Activated T-helper 1 cell treated with anti-CD3 and anti-CD28 coated beads, Interleukin-12 subunit alpha, Interleukin-12 subunit beta, Interleukin-2, Interleukin-4 antibody, amounts not matched to agents 30 ng/mL and 10 ng/mL and 1 ng/mL, durations not matched to agents 14 hours and 24 hours and 36 hours (primary cell): ENCODE measurements at regions of chr19 and their contacts with region 1.

Region 1: DNA sequence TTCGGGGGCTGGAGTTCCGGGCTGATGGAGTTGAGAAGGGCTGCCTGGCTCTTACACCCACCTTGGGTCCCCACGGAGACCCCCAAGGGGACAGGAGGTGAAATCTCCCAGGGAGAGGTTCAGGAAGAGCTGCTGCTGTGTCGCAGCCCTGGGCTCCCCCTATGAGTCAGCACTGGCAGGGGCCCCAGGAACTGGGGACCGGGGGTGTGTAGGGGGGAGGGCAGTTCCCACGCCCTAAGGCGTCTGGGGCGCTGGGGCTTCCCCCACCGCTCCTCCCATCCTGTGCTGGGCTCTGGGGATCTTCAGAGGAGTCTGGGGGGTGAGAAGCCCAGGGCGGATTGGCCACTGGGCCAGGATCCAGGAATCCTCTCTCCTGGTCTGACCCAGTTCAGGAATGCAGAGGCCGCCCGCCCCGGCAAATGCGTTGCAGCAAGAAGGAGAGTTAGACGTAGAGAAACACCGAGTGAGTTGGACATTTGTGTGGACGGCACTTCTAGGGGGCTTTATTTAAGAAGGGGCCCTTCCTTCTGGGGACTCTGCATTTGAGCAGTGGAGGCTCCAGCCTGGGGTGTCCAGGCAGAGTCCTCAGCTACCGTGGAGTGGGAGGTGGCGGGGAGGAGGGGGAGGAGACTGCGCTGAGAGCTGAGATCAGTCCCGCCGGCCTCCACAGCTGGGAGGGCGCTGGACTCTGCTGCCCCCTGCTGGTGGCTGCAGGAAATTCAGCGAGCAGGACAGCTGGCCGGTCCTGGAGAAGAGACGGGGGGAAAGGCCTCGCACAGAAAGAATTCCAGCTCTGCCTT is 15.0 kb upstream of the NANOS3 start:
- DNase-seq: peak; percentile 82
- H3K4me3 Mint-ChIP-seq: peak overlapping the region; percentile 96
- H3K27ac Mint-ChIP-seq: peak overlapping the region; percentile 98
- H3K4me1 Mint-ChIP-seq: peaks cover 49% of the 10 kb centered on the region
- H3K27me3 Mint-ChIP-seq: peaks cover 22% of the 10 kb centered on the region

Region 2: GRCh38 chr19:13277104-13277809 is 584.7 kb before region 1 on chr19:
- intact Hi-C with region 1: loop called (anchors 5 kb)
- DNase-seq: peak; percentile 72
- H3K4me3 Mint-ChIP-seq: no peak overlapping the region
- H3K27ac Mint-ChIP-seq: peak overlapping the region; percentile 71
- H3K4me1 Mint-ChIP-seq: peaks cover 16% of the 10 kb centered on the region
- H3K27me3 Mint-ChIP-seq: peaks cover 4% of the 10 kb centered on the region

Region 3: DNA sequence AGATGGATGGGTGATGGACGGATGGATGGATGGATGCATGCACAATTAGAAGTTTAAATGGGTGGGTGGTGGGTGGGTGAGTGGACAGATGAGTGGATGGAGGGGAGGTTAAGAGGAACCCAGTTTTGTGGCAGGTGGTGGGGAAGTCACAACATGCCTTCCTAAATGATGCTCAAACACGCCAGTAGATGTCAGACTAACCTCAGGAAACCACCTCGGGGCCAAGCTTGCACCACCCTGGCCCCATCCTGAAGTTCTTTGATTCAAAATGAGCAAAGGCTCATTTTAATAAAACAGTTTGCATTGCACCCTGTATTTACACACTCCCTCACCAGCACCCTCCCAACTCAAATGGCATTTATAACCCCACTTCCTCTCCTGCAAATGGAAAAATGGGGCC is 264.3 kb before region 1 on chr19:
- intact Hi-C with region 1: loop called (anchors 1 kb)
- DNase-seq: peak; percentile 34
- H3K4me3 Mint-ChIP-seq: no peak overlapping the region
- H3K27ac Mint-ChIP-seq: no peak overlapping the region
- H3K4me1 Mint-ChIP-seq: peaks cover 4% of the 10 kb centered on the region
- H3K27me3 Mint-ChIP-seq: no peaks in the 10 kb centered on the region

Region 4: DNA sequence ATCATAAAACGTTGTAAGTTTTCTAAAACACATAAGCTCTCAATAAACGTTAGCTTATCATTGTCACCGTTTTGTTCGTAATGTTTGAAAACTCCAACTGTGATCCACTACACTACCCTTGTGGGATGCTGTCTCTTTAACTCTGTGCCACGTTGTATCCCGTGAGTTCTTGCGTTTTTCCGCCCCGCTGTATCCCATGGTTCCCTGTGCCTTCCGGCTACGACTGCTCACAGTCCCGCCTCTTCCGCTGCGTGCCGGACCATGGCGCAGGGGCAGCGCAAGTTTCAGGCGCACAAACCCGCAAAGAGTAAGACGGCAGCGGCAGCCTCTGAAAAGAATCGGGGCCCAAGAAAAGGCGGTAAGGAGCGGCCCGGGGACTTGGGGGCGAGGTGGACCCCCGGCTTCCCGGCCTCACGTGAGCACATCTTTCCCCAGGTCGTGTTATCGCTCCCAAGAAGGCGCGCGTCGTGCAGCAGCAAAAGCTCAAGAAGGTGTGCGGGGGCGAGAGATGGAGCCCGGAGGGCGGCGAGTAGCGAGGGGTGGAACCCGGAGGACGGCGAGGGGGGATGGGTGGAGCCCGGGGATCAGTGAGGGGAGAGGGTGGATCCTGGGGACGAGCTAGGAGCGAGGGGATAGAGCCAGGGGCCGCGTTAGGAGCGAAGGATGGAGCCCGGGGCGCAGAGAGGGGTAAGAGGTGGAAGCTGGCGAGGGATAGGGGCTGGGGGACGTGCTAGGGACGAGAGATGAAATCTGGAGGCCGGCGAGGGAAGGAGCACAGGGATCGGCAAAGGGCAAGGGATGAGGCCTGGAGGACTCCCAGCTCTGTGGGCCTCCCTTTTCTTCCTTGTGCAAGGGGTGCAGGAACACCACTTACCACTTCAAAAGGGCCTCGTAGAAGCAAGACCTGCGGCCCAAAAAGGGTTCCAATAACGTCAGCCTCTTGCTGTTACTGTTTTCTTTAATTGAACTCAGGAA is 87.4 kb before region 1 on chr19 and contains the start of gene C19orf53:
- intact Hi-C with region 1: loop called (anchors 2 kb)
- DNase-seq: peak; percentile 87
- H3K4me3 Mint-ChIP-seq: peak within 1 kb of the TSS; percentile 100
- H3K27ac Mint-ChIP-seq: peak within 1 kb of the TSS; percentile 99
- H3K4me1 Mint-ChIP-seq: peaks cover 25% of the 10 kb centered on the region
- H3K27me3 Mint-ChIP-seq: no peaks in the 10 kb centered on the region
- total RNA-seq, gene C19orf53: 158 and 162 TPM in 2 replicates

Region 5: GRCh38 chr19:13784731-13785452 is 77.0 kb before region 1 on chr19:
- intact Hi-C with region 1: loop called (anchors 1 kb)
- DNase-seq: peak; percentile 45
- H3K4me3 Mint-ChIP-seq: peak overlapping the region; percentile 15
- H3K27ac Mint-ChIP-seq: peak overlapping the region; percentile 55
- H3K4me1 Mint-ChIP-seq: peaks cover 31% of the 10 kb centered on the region
- H3K27me3 Mint-ChIP-seq: no peaks in the 10 kb centered on the region

Region 6: DNA sequence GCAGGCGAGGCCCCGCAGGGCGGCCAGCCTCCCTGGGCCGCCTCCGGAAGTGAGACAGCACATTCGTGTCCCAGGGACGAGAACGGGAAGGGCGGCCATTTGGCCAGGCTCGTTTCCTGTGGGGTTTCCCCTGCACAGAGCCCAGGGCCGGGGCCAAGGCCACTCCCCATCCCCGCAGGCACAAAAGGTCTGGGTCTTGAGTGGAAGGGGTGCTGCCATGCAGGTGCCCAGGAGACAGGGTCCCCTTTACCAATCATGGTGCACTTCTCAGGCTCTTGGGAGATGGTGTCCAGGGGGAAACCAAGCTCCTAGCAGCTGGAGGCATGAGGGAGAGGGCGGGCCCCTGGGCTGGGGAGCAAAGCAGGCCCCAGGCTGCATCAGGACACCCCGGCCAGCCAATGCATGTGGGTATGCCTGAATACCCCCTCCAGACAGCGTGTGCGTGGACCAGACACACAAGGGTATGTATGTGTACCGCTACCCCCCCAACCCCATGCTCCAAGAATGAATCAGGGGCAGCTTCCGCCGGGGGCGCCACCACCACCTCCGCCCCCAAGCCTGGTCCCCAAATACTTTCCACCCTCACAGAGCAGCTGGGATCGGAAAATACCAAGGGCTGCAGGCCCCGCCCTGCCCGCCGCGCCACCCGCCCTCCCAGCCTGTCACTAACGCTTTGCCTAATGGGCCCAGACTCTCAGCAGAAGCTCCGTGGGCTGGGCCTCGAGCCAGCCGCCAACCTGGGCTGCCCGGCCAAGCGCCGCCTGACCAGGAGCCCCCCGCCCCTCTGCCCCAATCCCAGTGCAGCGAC is 22.6 kb before region 1 on chr19:
- intact Hi-C with region 1: loop called (anchors 1 kb)
- DNase-seq: peak; percentile 79
- H3K4me3 Mint-ChIP-seq: peak overlapping the region; percentile 93
- H3K27ac Mint-ChIP-seq: peak overlapping the region; percentile 99
- H3K4me1 Mint-ChIP-seq: peaks cover 36% of the 10 kb centered on the region
- H3K27me3 Mint-ChIP-seq: no peaks in the 10 kb centered on the region

Region 7: GRCh38 chr19:13846557-13847406 is 15.2 kb before region 1 on chr19:
- intact Hi-C with region 1: loop called (anchors 1 kb)
- DNase-seq: peak; percentile 96
- H3K4me3 Mint-ChIP-seq: peak overlapping the region; percentile 86
- H3K27ac Mint-ChIP-seq: peak overlapping the region; percentile 97
- H3K4me1 Mint-ChIP-seq: peaks cover 45% of the 10 kb centered on the region
- H3K27me3 Mint-ChIP-seq: no peaks in the 10 kb centered on the region